ENCODE measurements at regions of chr2 and their contacts with region 1.

Region 1: DNA sequence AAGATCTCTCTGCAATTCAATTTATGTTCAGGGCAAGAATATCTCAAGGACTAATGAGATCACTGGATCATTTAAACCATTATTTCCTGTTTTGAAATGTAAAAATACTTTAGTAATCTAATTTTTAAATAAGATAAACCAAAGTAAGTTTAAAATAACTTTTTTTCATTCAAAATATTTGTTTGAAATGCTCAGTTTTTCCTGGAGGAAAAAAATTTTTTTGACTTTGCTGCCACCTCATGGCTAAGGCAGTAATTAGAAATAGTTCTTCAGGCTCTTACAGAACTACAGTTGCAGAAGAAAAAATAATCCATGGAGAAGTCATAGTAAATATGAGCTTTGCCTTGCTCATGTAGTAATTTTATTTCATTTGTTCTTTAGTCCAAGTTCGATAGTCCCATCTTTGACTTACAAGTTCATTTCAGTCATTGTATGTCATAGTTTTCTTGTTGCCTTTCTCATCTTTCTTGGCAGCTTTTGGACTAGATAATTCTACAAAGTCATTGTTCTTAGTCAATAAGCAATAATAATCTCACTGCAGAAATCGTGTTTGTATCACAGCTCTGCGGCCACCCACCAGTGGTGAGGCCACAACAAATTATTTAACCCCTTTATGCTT is 127.4 kb downstream of the DPP4 start:
- DNase-seq: peak in 1 of 2 donors; percentile 52
- ATAC-seq: no peak
- H3K4me3 ChIP-seq: no peak overlapping the region
- H3K4me3 Mint-ChIP-seq: no peak overlapping the region
- H3K27ac ChIP-seq: no peak overlapping the region
- H3K27ac Mint-ChIP-seq: no peak overlapping the region
- H3K4me1 ChIP-seq: peaks cover 1% of the 10 kb centered on the region
- H3K4me1 Mint-ChIP-seq: peaks cover 0 to 4% of the 10 kb centered on the region in 2 donors
- H3K27me3 ChIP-seq: no peaks in the 10 kb centered on the region
- H3K27me3 Mint-ChIP-seq: no peaks in the 10 kb centered on the region
- CTCF ChIP-seq: peak; percentile 71

Region 2: GRCh38 chr2:161223139-161223732 is 723.4 kb before region 1 on chr2:
- intact Hi-C with region 1: loop called (anchors 5 kb)
- DNase-seq: peak in 1 of 2 donors; percentile 74
- ATAC-seq: peak; percentile 69 to 81 (median 74)
- H3K4me3 ChIP-seq: no peak overlapping the region
- H3K4me3 Mint-ChIP-seq: no peak overlapping the region
- H3K27ac ChIP-seq: no peak overlapping the region
- H3K27ac Mint-ChIP-seq: no peak overlapping the region
- H3K4me1 ChIP-seq: no peaks in the 10 kb centered on the region
- H3K4me1 Mint-ChIP-seq: no peaks in the 10 kb centered on the region
- H3K27me3 ChIP-seq: no peaks in the 10 kb centered on the region
- H3K27me3 Mint-ChIP-seq: no peaks in the 10 kb centered on the region
- CTCF ChIP-seq: peak; percentile 92

Region 3: GRCh38 chr2:161586517-161587167 is 360.0 kb before region 1 on chr2:
- intact Hi-C with region 1: loop called (anchors 1 kb)
- DNase-seq: peak in 1 of 2 donors; percentile 52
- ATAC-seq: no peak
- H3K4me3 ChIP-seq: no peak overlapping the region
- H3K4me3 Mint-ChIP-seq: no peak overlapping the region
- H3K27ac ChIP-seq: no peak overlapping the region
- H3K27ac Mint-ChIP-seq: no peak overlapping the region
- H3K4me1 ChIP-seq: no peaks in the 10 kb centered on the region
- H3K4me1 Mint-ChIP-seq: no peaks in the 10 kb centered on the region
- H3K27me3 ChIP-seq: no peaks in the 10 kb centered on the region
- H3K27me3 Mint-ChIP-seq: peaks cover 0 to 10% of the 10 kb centered on the region in 2 donors
- CTCF ChIP-seq: peak; percentile 65

Region 4: DNA sequence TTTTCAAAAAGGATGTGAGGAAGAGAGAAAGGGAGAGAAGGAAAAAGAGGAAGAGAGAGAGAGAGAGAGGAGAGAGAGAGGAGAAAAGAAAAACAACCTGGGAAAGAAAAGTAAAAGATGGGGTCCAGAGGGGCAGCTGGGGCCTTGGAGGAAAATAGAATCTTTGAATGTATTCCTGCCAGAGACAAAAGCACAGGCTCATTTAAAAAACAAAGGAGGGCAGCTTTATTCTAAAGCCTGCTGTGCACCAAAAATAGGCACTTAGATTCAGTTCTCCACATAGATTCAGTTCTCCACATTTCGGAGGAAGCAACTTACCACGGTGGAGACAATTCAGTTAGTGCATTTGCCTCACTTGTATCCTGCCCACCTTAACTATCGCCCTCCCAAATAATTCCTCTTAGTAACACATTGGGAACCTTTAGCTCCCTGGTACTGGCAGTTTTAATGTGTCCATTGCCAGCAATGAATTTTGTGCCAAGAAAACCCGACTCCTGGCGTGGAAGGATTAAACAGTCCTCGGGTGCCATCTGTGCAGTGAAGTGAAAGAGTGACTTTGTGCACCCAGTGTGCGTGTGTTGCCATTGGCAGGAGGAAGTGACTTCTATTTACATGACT is 56.1 kb after region 1 on chr2:
- intact Hi-C with region 1: no loop called
- DNase-seq: no peak
- ATAC-seq: no peak
- H3K4me3 ChIP-seq: no peak overlapping the region
- H3K4me3 Mint-ChIP-seq: no peak overlapping the region
- H3K27ac ChIP-seq: no peak overlapping the region
- H3K27ac Mint-ChIP-seq: no peak overlapping the region
- H3K4me1 ChIP-seq: no peaks in the 10 kb centered on the region
- H3K4me1 Mint-ChIP-seq: no peaks in the 10 kb centered on the region
- H3K27me3 ChIP-seq: no peaks in the 10 kb centered on the region
- H3K27me3 Mint-ChIP-seq: no peaks in the 10 kb centered on the region
- CTCF ChIP-seq: no peak

Region 5: DNA sequence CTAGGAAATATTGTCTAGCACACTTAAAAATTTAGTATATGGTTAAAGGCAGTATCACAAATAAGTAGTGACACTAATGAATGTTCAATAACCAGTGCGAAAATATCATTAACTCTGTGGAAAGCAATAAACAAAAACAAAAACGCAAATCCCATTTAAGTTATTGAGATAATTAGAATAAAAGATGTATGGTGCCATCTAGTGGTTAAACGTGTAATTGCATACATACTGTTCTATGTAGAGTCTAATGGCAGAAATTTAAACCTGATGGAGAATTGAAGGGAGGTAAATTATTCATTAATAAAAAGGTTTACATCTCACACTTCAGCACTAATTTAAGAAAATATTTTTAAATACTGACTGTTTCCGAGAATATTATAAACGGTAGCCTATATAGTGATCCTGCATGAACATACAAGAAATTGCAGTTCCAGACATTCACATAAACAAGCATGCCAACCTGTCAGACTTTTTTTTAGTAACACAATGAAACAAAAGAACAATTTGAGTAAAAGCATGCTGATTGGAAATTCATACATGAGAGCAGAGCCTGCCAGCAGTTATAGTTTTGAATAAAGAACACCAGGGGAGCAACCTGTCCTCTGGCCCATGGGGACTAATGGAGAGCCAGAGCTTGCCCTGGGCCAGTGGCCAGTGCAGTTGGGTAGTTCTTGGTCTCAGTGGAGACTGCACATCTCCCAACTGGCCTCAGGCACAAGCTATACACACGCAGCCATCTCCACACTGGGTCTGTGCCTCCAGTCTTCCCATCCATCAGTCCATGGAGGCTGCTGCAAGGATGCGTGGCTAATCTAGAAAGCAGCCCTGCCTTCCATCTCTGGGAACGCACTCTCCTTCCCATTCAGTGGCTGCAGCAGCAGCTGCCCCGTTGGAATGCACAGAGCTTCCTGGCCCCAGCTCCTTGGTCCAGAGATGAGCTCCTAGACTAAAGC is 177.5 kb after region 1 on chr2:
- intact Hi-C with region 1: loop called (anchors 1 kb)
- DNase-seq: peak in 1 of 2 donors; percentile 85
- ATAC-seq: peak; percentile 72 to 79 (median 74)
- H3K4me3 ChIP-seq: no peak overlapping the region
- H3K4me3 Mint-ChIP-seq: no peak overlapping the region
- H3K27ac ChIP-seq: no peak overlapping the region
- H3K27ac Mint-ChIP-seq: no peak overlapping the region
- H3K4me1 ChIP-seq: no peaks in the 10 kb centered on the region
- H3K4me1 Mint-ChIP-seq: no peaks in the 10 kb centered on the region
- H3K27me3 ChIP-seq: no peaks in the 10 kb centered on the region
- H3K27me3 Mint-ChIP-seq: no peaks in the 10 kb centered on the region
- CTCF ChIP-seq: peak; percentile 95

Measured in natural killer cell (primary cell).